ENCODE measurements at regions of chr1 and their contacts with region 1.

Region 1: GRCh38 chr1:218323568-218324225 is 21.4 kb upstream of the TGFB2 start:
- DNase-seq: no peak
- H3K4me3 ChIP-seq: no peak overlapping the region
- H3K27ac ChIP-seq: no peak overlapping the region
- H3K4me1 ChIP-seq: no peaks in the 10 kb centered on the region
- H3K27me3 ChIP-seq: no peaks in the 10 kb centered on the region

Region 2: GRCh38 chr1:217718881-217719280 is 604.8 kb before region 1 on chr1:
- in situ Hi-C with region 1: no loop called
- DNase-seq: peak; percentile 23
- H3K4me3 ChIP-seq: no peak overlapping the region
- H3K27ac ChIP-seq: no peak overlapping the region
- H3K4me1 ChIP-seq: no peaks in the 10 kb centered on the region
- H3K27me3 ChIP-seq: no peaks in the 10 kb centered on the region

Region 3: DNA sequence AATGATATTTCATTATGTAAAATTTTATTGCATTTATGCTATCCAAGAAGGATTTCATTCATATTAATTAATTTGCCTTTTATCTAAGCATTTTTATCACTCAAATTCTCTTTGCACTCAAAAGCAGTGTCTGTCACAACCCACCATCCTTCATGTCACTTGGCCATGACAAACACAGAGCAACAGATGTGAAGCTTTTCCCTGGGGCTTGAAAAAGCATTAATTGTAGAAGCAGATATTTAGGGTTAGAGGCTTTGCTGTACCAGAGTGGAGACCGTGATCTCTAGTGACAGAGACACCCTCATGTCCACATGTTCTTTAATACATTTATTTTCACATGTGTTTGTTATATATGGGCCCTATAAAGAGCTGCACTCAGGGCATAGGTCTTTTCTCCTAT is 462.0 kb before region 1 on chr1:
- in situ Hi-C with region 1: no loop called
- DNase-seq: no peak
- H3K4me3 ChIP-seq: no peak overlapping the region
- H3K27ac ChIP-seq: no peak overlapping the region
- H3K4me1 ChIP-seq: no peaks in the 10 kb centered on the region
- H3K27me3 ChIP-seq: no peaks in the 10 kb centered on the region

Region 4: GRCh38 chr1:218930472-218931241 is 607.0 kb after region 1 on chr1:
- in situ Hi-C with region 1: no loop called
- DNase-seq: no peak
- H3K4me3 ChIP-seq: no peak overlapping the region
- H3K27ac ChIP-seq: no peak overlapping the region
- H3K4me1 ChIP-seq: no peaks in the 10 kb centered on the region
- H3K27me3 ChIP-seq: no peaks in the 10 kb centered on the region

Region 5: DNA sequence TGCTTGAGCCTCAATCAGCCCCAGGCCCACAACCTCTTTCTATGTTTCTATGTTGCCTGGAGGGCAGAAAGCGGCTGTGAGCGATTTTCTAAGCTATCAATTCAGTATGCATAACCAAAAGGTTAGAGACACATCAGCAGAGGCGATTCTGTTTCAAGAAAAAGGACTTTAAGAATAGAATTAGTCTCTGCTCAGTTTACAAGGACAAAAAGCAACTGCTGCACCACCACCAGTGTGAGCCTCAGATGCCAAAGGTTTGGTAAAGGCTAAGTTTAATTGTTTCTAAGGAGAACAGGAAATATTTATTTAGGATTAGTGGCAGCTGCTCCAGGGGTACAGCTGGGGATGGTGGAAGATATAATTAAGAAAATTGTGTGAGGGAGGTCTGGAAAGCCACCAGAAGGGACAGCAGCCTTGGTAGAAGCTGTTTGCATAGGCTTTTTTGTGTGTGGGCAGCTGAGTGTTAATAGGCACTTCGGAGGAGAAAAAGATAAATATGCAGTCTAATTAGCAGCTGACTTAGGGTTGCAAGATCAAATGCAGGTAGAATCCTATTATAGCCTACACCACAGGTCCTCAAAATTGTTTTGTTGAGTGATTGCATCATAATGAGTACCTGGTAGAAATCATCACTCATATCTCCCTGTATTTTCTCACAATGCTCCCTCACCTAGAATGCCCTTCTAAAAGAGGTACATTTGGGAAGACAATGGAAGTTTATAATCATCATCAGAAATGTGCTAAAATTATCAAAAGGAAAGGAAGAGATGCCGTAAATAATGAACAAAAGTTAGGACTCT is 1253.4 kb after region 1 on chr1:
- in situ Hi-C with region 1: loop called (anchors 10 kb)
- DNase-seq: no peak
- H3K4me3 ChIP-seq: no peak overlapping the region
- H3K27ac ChIP-seq: no peak overlapping the region
- H3K4me1 ChIP-seq: peaks cover 4% of the 10 kb centered on the region; the same call in 1 of the 2 replicates
- H3K27me3 ChIP-seq: peaks cover 33% of the 10 kb centered on the region

Measured in GM23248 (cell line).